Activated T-helper 1 cell treated with anti-CD3 and anti-CD28 coated beads, Interleukin-12 subunit alpha, Interleukin-12 subunit beta, Interleukin-2, Interleukin-4 antibody, amounts not matched to agents 30 ng/mL and 10 ng/mL and 1 ng/mL, durations not matched to agents 14 hours and 24 hours and 36 hours (primary cell): ENCODE measurements at regions of chr4 and their contacts with region 1.

Region 1: DNA sequence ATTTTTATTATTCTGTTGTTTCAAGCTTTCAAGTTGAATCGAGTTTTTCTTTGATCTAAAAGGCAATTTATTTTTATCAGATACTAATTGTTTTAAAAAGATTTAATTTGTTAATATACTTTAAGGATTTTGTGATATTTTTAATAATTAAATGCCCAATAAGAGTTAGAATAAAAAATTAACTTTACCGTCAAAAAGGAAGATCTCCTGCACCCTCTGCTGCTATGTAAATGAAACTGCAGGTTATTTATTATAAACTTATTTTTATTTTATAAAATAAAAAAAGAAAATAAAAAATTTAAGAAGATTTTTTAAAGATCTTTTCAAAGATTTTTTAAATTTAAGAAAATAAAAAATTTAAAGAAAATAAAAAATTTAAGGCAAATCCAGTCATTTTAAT is 166.1 kb downstream of the CCSER1 start:
- DNase-seq: no peak
- H3K4me3 Mint-ChIP-seq: no peak overlapping the region
- H3K27ac Mint-ChIP-seq: no peak overlapping the region
- H3K4me1 Mint-ChIP-seq: no peaks in the 10 kb centered on the region
- H3K27me3 Mint-ChIP-seq: no peaks in the 10 kb centered on the region

Region 2: DNA sequence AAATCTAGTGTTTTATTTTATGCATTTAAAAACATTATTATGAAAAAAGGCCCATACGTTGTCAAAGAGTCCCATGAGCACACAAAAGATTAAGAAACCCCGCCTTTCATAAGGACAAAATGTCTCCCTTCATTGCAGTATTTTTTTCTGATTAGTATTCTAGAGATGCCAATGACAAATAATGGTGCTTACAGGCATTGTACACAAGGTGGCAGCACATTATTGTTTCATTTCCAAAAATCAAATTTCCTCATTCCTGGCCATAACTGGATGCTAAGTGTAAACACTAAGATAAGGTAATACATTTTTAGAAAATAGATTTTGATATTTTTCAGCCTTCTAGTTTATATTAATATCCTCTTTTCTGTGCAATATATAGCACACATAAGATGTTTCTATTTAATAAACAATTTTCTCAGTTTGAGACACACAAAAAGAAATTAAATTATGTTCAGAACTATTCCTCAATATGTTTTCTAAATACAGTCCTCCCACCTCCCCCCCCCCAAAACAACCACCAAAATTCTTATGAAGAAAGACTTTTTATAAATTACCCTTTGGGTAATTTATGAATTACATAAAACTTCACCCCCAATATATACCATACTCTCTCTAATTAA is 1134.3 kb before region 1 on chr4:
- intact Hi-C with region 1: loop called (anchors 5 kb)
- DNase-seq: no peak
- H3K4me3 Mint-ChIP-seq: no peak overlapping the region
- H3K27ac Mint-ChIP-seq: no peak overlapping the region
- H3K4me1 Mint-ChIP-seq: no peaks in the 10 kb centered on the region
- H3K27me3 Mint-ChIP-seq: peaks cover 13% of the 10 kb centered on the region

Region 3: GRCh38 chr4:89914609-89915550 is 378.4 kb before region 1 on chr4:
- intact Hi-C with region 1: loop called (anchors 5 kb)
- DNase-seq: no peak
- H3K4me3 Mint-ChIP-seq: no peak overlapping the region
- H3K27ac Mint-ChIP-seq: no peak overlapping the region
- H3K4me1 Mint-ChIP-seq: no peaks in the 10 kb centered on the region
- H3K27me3 Mint-ChIP-seq: peaks cover 10% of the 10 kb centered on the region

Region 4: DNA sequence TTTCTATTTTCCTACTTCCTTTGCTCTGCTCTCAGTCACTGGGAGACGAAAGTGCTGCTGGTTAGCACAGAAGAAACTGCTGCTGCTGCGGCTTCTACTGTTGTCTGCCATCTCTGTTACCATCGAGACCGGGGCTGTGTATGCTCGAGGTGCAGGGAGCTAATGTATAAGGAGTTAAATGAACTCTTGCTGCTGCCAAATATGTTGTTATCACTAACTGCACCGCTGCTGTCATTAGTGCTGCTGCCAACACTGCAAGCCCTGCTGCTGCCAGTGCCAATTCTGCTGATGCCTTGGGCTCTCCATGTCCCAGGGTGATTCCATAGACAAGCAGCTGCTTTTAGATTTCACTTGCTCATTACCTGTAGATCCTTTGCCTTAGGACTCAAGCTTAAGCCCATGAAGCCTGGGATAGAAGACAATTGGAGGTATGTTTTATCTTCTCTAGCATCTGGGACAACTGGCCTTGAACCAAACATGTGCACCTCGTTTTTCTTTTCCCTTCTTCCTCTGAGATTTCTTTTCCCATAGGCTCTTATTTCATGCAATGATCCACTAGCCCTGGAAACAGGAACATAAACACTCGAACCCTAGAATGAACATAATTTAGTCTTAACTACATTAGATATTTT is 58.3 kb before region 1 on chr4:
- intact Hi-C with region 1: no loop called
- DNase-seq: no peak
- H3K4me3 Mint-ChIP-seq: no peak overlapping the region
- H3K27ac Mint-ChIP-seq: no peak overlapping the region
- H3K4me1 Mint-ChIP-seq: no peaks in the 10 kb centered on the region
- H3K27me3 Mint-ChIP-seq: no peaks in the 10 kb centered on the region